HCT116 (cell line): ENCODE measurements at regions of chr17 and their contacts with region 1.

Region 1: DNA sequence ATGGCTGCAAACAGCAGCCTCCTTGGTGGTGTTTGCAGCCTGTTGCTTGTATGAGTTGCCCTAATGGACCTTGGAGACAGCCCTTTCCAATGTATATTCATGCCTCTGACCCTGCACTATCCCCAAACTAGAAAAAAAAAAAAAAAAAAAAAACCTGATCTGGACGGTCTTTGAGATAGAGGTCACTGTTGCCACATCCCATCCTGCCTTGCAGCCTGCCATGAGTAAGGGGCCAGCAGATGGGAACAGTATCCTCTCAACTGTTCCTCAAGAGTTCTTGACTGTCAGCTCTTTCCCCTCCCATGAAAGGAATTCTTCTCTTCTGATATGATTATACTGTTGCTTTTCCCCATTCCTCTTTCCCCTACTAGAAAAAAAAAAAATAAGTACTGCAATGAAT is 152.4 kb downstream of the SSH2 start:
- DNase-seq: no peak
- ATAC-seq: no peak
- H3K4me3 ChIP-seq: no peak overlapping the region
- H3K27ac ChIP-seq: no peak overlapping the region
- H3K4me1 ChIP-seq: no peaks in the 10 kb centered on the region
- H3K27me3 ChIP-seq: no peaks in the 10 kb centered on the region
- CTCF ChIP-seq: no peak
- POLR2A ChIP-seq: no peak
- RAD21 ChIP-seq: no peak

Region 2: DNA sequence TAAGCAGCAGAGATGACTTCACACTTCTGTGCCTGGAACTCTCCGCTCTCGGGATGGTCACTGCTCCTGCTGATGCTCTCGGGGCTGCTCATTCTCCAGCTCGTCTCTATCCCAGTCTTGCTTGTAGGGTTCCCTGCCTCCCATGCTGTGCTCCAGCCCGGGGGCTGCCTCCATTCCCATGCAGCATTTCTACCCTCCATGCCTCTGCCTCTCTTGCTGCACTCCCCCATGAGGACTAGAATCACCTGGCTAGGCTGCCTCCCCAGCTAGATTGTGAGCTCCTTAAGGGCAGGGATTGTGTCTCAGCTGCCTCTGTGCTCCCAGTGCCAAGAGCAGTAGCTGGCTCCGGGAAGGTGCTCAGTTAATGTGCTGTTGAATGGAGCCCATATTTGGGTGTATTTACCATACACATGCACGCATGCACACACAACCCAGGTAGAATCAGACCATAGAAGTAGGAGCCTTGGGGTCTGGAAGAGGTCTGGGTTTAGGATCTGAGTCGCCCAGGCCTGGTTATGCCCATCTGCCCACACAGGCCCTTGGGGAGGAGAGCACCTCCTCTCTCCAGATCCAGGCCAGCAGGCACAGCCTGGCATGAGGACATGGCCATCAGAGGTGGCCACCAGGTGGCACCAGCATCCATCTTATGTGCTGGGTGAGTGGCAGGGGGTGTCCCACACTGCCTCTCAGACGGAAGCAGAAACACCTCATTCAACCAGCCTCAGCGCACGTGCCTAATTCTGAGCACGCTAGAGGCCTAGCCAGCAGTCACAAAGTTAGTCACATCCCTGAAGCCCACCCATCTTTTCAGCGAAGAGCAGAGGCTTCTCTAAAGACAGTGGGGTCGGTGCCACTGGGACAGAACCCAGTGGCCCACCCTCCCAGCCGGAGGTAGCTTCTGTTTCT is 197.5 kb before region 1 on chr17:
- CTCF ChIA-PET with region 1: interaction called, 7 read pairs
- POLR2A ChIA-PET with region 1: no interaction called
- RAD21 ChIA-PET with region 1: no interaction called
- intact Hi-C with region 1: loop called (anchors 1 kb)
- DNase-seq: peak; percentile 67
- ATAC-seq: peak; percentile 97
- H3K4me3 ChIP-seq: no peak overlapping the region
- H3K27ac ChIP-seq: peak overlapping the region; percentile 37
- H3K4me1 ChIP-seq: peaks cover 5 to 26% of the 10 kb centered on the region in 2 experiments; a peak in 3 of 4 replicates
- H3K27me3 ChIP-seq: no peaks in the 10 kb centered on the region
- CTCF ChIP-seq: peak; percentile 88
- POLR2A ChIP-seq: no peak
- RAD21 ChIP-seq: peak; percentile 95

Region 3: GRCh38 chr17:29766796-29767327 is 10.8 kb before region 1 on chr17:
- CTCF ChIA-PET with region 1: interaction called, 16 read pairs
- POLR2A ChIA-PET with region 1: no interaction called
- RAD21 ChIA-PET with region 1: no interaction called
- intact Hi-C with region 1: no loop called
- DNase-seq: no peak
- ATAC-seq: no peak
- H3K4me3 ChIP-seq: no peak overlapping the region
- H3K27ac ChIP-seq: no peak overlapping the region
- H3K4me1 ChIP-seq: no peaks in the 10 kb centered on the region
- H3K27me3 ChIP-seq: no peaks in the 10 kb centered on the region
- CTCF ChIP-seq: no peak
- POLR2A ChIP-seq: no peak
- RAD21 ChIP-seq: no peak

Region 4: GRCh38 chr17:29874931-29875596 is 97.4 kb after region 1 on chr17:
- CTCF ChIA-PET with region 1: no interaction called
- POLR2A ChIA-PET with region 1: no interaction called
- RAD21 ChIA-PET with region 1: no interaction called
- intact Hi-C with region 1: no loop called
- DNase-seq: no peak
- ATAC-seq: no peak
- H3K4me3 ChIP-seq: no peak overlapping the region
- H3K27ac ChIP-seq: no peak overlapping the region
- H3K4me1 ChIP-seq: no peaks in the 10 kb centered on the region
- H3K27me3 ChIP-seq: no peaks in the 10 kb centered on the region
- CTCF ChIP-seq: no peak
- POLR2A ChIP-seq: no peak
- RAD21 ChIP-seq: no peak